Adrenal gland (tissue), 19 donors: ENCODE measurements at regions of chr1 and their contacts with region 1.

Region 1: GRCh38 chr1:91529856-91530255 is 29.2 kb downstream of the CDC7 start:
- DNase-seq: peak in 6 of 7 donors; percentile 37 to 73 (median 54)
- H3K4me3 ChIP-seq: no peak overlapping the region
- H3K27ac ChIP-seq: no peak overlapping the region
- H3K4me1 ChIP-seq: no peaks in the 10 kb centered on the region
- H3K27me3 ChIP-seq: no peaks in the 10 kb centered on the region
- CTCF ChIP-seq: peak; percentile 27 to 61 (median 50)
- POLR2A ChIP-seq: no peak

Region 2: DNA sequence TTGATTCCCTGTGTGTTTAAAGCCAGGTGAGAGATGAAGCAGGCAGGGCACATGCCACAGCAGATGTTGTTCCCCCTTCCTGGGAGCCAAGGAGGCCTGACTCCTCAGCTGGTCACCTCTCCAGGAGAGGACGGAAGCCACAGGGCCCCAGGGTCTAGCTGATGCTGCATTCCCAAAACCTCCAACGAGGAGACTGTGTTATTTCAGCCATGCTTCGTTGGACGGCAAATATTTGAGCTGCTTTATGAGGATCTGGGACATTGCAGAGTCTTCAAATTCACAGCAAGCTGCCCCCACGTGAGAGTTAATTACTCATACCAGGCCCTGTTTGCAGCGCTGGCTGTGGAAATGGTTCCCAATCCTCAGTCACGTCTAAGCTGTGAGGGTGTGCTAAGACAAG is 56.1 kb after region 1 on chr1:
- intact Hi-C with region 1: loop called in 1 of 2 experiments (anchors 5 kb)
- DNase-seq: no peak
- H3K4me3 ChIP-seq: no peak overlapping the region
- H3K27ac ChIP-seq: no peak overlapping the region
- H3K4me1 ChIP-seq: peaks cover 2 to 6% of the 10 kb centered on the region in 2 donors
- H3K27me3 ChIP-seq: no peaks in the 10 kb centered on the region
- CTCF ChIP-seq: no peak
- POLR2A ChIP-seq: no peak